Panc1 (cell line): ENCODE measurements at regions of chr20 and their contacts with region 1.

Region 1: DNA sequence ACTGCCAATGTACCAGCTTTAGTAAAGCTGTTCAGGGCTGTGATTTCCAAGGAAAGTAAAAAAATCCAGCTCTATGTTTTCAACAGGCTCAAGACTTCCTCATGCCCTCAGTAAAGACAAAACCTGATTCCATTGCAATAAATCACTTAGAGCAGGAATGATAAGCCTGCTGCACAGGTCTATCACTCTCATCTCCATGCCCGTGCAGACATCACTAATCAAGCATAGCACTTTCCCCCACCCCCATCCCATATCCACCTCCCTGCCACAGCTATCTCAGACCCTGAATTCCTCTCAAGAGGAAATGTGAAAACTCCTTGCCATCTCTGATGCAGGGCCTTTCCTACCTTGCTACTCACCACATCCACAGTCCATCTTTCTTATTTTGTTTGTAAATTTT is 554.9 kb downstream of the MAFB start:
- DNase-seq: no peak
- ATAC-seq: no peak
- H3K4me3 ChIP-seq: no peak overlapping the region
- H3K27ac ChIP-seq: no peak overlapping the region
- H3K4me1 ChIP-seq: no peaks in the 10 kb centered on the region
- H3K27me3 ChIP-seq: no peaks in the 10 kb centered on the region; the same call in 1 of the 2 replicates
- CTCF ChIP-seq: no peak

Region 2: DNA sequence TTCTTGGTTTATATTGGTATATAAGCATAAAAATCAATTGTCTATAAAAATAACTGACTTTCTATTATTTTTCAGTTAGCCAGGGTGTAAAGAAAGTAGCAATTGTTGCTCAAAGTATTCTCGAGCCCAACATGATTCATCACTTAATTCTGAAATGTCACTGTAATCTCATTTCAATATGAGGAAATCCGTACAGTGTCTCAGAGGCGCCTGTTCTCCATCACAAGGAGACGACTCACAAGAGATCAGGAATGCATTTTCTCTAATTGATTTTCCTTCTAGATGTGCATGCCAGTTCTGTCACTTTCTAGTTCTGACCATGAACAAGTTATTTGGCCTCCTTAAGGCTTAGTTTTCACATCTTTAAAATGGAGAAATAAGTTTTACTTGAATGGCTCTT is 198.3 kb before region 1 on chr20:
- CTCF ChIA-PET with region 1: no interaction called
- POLR2A ChIA-PET with region 1: no interaction called
- in situ Hi-C with region 1: no loop called
- intact Hi-C with region 1: no loop called
- DNase-seq: no peak
- ATAC-seq: no peak
- H3K4me3 ChIP-seq: no peak overlapping the region
- H3K27ac ChIP-seq: no peak overlapping the region
- H3K4me1 ChIP-seq: no peaks in the 10 kb centered on the region
- H3K27me3 ChIP-seq: no peaks in the 10 kb centered on the region
- CTCF ChIP-seq: no peak

Region 3: GRCh38 chr20:40101560-40101959 is 32.6 kb before region 1 on chr20:
- CTCF ChIA-PET with region 1: no interaction called
- POLR2A ChIA-PET with region 1: no interaction called
- in situ Hi-C with region 1: no loop called
- intact Hi-C with region 1: loop called (anchors 1 kb)
- DNase-seq: no peak
- ATAC-seq: no peak
- H3K4me3 ChIP-seq: no peak overlapping the region
- H3K27ac ChIP-seq: no peak overlapping the region
- H3K4me1 ChIP-seq: no peaks in the 10 kb centered on the region
- H3K27me3 ChIP-seq: no peaks in the 10 kb centered on the region
- CTCF ChIP-seq: no peak